SK-N-SH (cell line): ENCODE measurements at regions of chr6 and their contacts with region 1.

Region 1: DNA sequence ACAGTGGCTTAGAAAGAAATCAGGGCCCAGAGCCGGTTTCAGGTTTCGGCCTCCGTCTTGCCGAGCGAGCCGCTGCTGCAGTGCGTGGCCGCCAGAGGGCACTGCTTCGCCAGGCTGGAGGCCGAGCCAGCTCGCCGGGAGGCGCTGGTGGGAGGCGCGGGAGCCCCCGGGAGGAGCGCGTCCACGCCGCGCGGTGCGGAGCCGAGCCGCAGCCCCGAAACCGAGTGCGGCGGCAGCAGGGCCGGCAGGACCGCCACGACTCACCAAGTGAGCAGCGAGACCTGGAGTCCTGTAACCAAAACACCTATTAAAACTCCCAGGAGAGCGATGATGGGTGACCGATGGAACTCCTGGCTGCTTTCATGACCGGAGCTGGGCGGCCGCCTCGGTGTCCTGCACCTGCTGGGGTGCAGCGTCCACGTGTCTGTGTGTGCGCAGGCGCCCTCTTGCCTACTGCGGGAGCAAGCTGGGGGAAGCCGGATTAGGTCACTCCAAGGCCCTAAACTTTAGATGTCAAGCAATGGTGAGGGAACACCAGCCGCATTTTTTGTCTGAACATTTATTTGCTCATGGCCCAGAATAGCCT is 186.9 kb upstream of the UST start:
- DNase-seq: peak; percentile 84
- H3K4me3 ChIP-seq: peak overlapping the region; percentile 47 to 59
- H3K27ac ChIP-seq: no peak overlapping the region
- H3K4me1 ChIP-seq: peaks cover 0 to 5% of the 10 kb centered on the region in 2 experiments; a peak in 1 of 4 replicates
- H3K27me3 ChIP-seq: no peaks in the 10 kb centered on the region
- CTCF ChIP-seq: peak; percentile 90
- EP300 ChIP-seq: no peak
- RAD21 ChIP-seq: peak; percentile 72

Region 2: GRCh38 chr6:148538261-148539190 is 21.4 kb before region 1 on chr6:
- CTCF ChIA-PET with region 1: interaction called, 15 read pairs
- POLR2A ChIA-PET with region 1: no interaction called
- DNase-seq: no peak
- H3K4me3 ChIP-seq: no peak overlapping the region
- H3K27ac ChIP-seq: peak overlapping the region; percentile 62 to 84; a peak in 3 of 4 replicates
- H3K4me1 ChIP-seq: peaks cover 0 to 11% of the 10 kb centered on the region in 2 experiments; a peak in 1 of 4 replicates
- H3K27me3 ChIP-seq: no peaks in the 10 kb centered on the region
- CTCF ChIP-seq: no peak
- EP300 ChIP-seq: no peak
- RAD21 ChIP-seq: no peak

Region 3: DNA sequence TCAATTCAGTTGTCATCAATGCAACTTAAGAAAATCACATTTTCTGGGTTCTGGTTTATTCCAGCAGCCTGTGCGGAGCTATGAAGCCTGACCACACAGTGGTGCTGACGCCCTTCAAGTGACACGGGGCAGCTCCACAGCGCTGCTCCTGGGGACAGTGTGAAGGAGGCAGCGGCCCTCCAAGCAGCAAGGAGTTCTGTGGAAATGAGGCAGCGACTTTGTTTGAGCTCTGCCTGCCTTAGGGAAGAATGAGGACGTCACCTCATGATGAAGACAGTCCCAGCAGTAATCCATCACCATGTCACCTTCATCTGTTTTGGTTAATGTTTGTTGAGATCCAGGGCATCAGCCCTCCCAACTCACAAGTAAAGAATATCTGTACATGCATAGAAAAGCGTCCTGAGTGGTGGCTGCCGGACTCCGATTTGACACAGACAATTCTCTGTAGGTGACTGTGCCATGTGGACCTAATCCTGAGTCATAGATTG is 18.3 kb after region 1 on chr6:
- CTCF ChIA-PET with region 1: interaction called, 15 read pairs
- POLR2A ChIA-PET with region 1: no interaction called
- DNase-seq: peak; percentile 39
- H3K4me3 ChIP-seq: peak overlapping the region in 1 of 2 experiments; percentile 39; a peak in 1 of 4 replicates
- H3K27ac ChIP-seq: no peak overlapping the region
- H3K4me1 ChIP-seq: no peaks in the 10 kb centered on the region
- H3K27me3 ChIP-seq: no peaks in the 10 kb centered on the region; the same call in 1 of the 2 replicates
- CTCF ChIP-seq: peak; percentile 80
- EP300 ChIP-seq: no peak
- RAD21 ChIP-seq: peak; percentile 72

Region 4: DNA sequence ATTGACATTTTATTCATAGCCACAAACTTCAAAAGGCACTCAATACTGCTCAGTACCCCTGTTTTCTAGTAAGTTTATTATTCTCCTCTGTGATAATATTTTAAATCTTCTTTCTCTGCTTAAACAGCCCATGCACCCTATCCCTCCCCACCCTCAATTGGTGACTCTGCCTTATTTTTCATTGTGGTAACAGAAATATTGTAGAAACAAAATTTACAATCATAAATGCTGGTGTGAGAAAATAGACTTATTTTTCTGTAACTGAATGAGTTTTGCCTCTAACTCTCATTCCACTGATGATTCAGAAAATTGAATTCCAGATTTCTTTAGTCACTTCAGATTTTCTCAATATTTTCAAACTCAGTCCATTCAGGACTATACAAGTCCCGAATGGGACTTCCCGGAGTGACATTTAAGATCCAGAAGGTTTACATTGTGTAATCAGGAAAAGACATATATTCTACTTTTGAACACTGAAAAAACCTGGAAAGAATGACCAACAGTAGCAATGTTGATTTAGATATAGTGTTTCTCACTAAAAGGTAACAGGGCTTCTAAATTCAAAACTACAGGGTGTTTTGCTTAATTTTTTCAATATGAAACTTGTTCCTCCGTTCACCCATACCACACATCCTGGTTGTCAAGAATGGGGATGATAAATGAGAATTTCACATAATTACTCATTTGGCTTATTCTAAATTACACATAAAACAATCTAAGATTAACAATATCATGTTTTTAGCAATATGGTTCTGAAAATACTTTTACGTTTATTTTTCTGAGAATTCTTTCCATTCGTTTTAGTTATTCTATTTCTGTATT is 152.1 kb after region 1 on chr6:
- CTCF ChIA-PET with region 1: no interaction called
- POLR2A ChIA-PET with region 1: no interaction called
- DNase-seq: no peak
- H3K4me3 ChIP-seq: no peak overlapping the region
- H3K27ac ChIP-seq: no peak overlapping the region
- H3K4me1 ChIP-seq: no peaks in the 10 kb centered on the region
- H3K27me3 ChIP-seq: no peaks in the 10 kb centered on the region
- CTCF ChIP-seq: no peak
- EP300 ChIP-seq: no peak
- RAD21 ChIP-seq: no peak

Region 5: DNA sequence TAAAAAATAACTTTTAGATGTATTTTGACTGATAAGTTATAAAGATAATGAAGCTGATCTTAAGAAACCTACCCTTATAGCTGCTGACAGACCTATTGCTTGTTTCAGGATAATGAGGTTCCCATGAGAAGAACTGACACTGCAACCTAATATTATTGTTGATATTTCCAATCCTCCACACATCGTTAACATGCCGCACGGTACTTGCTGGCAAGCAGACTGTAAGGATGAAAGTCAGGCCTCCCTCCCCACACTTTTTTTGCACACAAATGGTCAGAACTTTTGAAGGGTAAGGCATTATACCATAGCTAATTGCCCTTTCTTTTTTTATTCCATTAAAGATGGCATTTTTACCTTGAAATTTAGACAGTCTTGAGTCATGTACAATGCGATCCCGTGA is 397.8 kb after region 1 on chr6:
- CTCF ChIA-PET with region 1: interaction called, 10 read pairs
- POLR2A ChIA-PET with region 1: no interaction called
- DNase-seq: no peak
- H3K4me3 ChIP-seq: no peak overlapping the region
- H3K27ac ChIP-seq: no peak overlapping the region
- H3K4me1 ChIP-seq: no peaks in the 10 kb centered on the region
- H3K27me3 ChIP-seq: no peaks in the 10 kb centered on the region
- CTCF ChIP-seq: no peak
- EP300 ChIP-seq: no peak
- RAD21 ChIP-seq: no peak